ENCODE measurements at regions of chr5 and their contacts with region 1.

Region 1: GRCh38 chr5:9774472-9775079 is 144.4 kb upstream of the TAS2R1 start:
- DNase-seq: peak; percentile 16
- H3K4me3 ChIP-seq: no peak overlapping the region
- H3K27ac ChIP-seq: no peak overlapping the region
- H3K4me1 ChIP-seq: no peaks in the 10 kb centered on the region
- H3K27me3 ChIP-seq: no peaks in the 10 kb centered on the region
- CTCF ChIP-seq: peak in 1 of 2 donors; percentile 14

Region 2: GRCh38 chr5:9733486-9733885 is 41.1 kb before region 1 on chr5:
- CTCF ChIA-PET with region 1: no interaction called
- dilution Hi-C with region 1: loop called (anchors 5 kb)
- in situ Hi-C with region 1: no loop called
- intact Hi-C with region 1: no loop called
- DNase-seq: no peak
- H3K4me3 ChIP-seq: no peak overlapping the region
- H3K27ac ChIP-seq: no peak overlapping the region
- H3K4me1 ChIP-seq: no peaks in the 10 kb centered on the region
- H3K27me3 ChIP-seq: no peaks in the 10 kb centered on the region
- CTCF ChIP-seq: no peak